ENCODE measurements at regions of chr1 and their contacts with region 1.

Region 1: DNA sequence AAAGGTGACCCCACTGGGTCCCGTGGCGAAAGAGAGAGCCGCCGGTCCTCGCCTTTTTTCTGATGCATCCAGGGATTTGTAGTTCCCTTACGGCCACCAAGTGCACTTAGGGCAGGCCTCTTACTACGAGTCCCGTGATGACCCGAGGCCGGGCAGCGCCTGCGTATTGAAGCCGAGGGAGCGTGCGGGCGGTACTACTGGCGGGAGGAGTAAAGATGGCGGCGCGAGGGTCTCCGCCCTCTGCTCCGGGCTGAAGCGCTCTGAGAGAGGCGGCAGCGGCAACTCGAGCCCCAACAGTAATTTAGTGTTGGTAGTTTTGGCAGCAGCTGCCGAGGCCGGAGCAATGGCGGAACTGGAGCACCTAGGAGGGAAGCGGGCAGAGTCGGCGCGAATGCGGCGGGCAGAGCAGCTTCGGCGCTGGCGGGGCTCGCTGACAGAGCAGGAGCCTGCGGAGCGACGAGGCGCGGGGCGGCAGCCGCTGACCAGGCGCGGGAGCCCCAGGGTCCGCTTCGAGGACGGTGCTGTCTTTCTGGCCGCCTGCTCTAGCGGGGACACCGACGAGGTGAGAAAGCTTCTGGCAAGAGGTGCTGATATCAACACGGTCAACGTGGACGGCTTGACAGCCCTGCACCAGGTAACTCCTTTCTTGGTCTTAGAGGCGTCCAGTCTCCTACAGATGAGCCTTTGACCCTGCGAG is at the start of gene PPP1R12B:
- DNase-seq: peak; percentile 93 to 98 (median 95)
- H3K4me3 ChIP-seq: peak within 1 kb of the TSS; percentile 79 to 90
- H3K4me3 Mint-ChIP-seq: peak within 1 kb of the TSS; percentile 91 to 97 (median 92)
- H3K27ac ChIP-seq: peak within 1 kb of the TSS; percentile 82
- H3K27ac Mint-ChIP-seq: peak within 1 kb of the TSS; percentile 84 to 97 (median 94)
- H3K4me1 ChIP-seq: peaks cover 25% of the 10 kb centered on the region
- H3K4me1 Mint-ChIP-seq: peaks cover 16 to 42% (median 30%) of the 10 kb centered on the region in 4 donors
- H3K27me3 ChIP-seq: no peaks in the 10 kb centered on the region
- H3K27me3 Mint-ChIP-seq: no peaks in the 10 kb centered on the region
- total RNA-seq, gene PPP1R12B: 28.2 to 33.7 TPM

Region 2: GRCh38 chr1:201955009-201955728 is 393.5 kb before region 1 on chr1 and contains the start of gene TIMM17A:
- CTCF ChIA-PET with region 1: no interaction called
- POLR2A ChIA-PET with region 1: no interaction called
- intact Hi-C with region 1: loop called (anchors 5 kb)
- DNase-seq: peak; percentile 90 to 95 (median 90)
- H3K4me3 ChIP-seq: peak within 1 kb of the TSS; percentile 83 to 99
- H3K4me3 Mint-ChIP-seq: peak within 1 kb of the TSS; percentile 92 to 99 (median 98)
- H3K27ac ChIP-seq: peak within 1 kb of the TSS; percentile 83
- H3K27ac Mint-ChIP-seq: peak within 1 kb of the TSS; percentile 97 to 99 (median 98)
- H3K4me1 ChIP-seq: peaks cover 19% of the 10 kb centered on the region
- H3K4me1 Mint-ChIP-seq: peaks cover 12 to 30% (median 20%) of the 10 kb centered on the region in 4 donors
- H3K27me3 ChIP-seq: no peaks in the 10 kb centered on the region
- H3K27me3 Mint-ChIP-seq: no peaks in the 10 kb centered on the region
- total RNA-seq, gene TIMM17A: 26.0 to 27.1 TPM

Region 3: GRCh38 chr1:202713110-202713509 is 364.5 kb after region 1 on chr1:
- CTCF ChIA-PET with region 1: interaction called, 47 read pairs
- POLR2A ChIA-PET with region 1: no interaction called
- intact Hi-C with region 1: no loop called
- DNase-seq: no peak
- H3K4me3 ChIP-seq: no peak overlapping the region
- H3K4me3 Mint-ChIP-seq: no peak overlapping the region
- H3K27ac ChIP-seq: no peak overlapping the region
- H3K27ac Mint-ChIP-seq: peak overlapping the region in 1 of 7 donors; percentile 12
- H3K4me1 ChIP-seq: no peaks in the 10 kb centered on the region
- H3K4me1 Mint-ChIP-seq: peaks cover 0 to 5% (median 0%) of the 10 kb centered on the region in 4 donors
- H3K27me3 ChIP-seq: peaks cover 27% of the 10 kb centered on the region
- H3K27me3 Mint-ChIP-seq: peaks cover 32 to 37% of the 10 kb centered on the region in 2 donors

Region 4: DNA sequence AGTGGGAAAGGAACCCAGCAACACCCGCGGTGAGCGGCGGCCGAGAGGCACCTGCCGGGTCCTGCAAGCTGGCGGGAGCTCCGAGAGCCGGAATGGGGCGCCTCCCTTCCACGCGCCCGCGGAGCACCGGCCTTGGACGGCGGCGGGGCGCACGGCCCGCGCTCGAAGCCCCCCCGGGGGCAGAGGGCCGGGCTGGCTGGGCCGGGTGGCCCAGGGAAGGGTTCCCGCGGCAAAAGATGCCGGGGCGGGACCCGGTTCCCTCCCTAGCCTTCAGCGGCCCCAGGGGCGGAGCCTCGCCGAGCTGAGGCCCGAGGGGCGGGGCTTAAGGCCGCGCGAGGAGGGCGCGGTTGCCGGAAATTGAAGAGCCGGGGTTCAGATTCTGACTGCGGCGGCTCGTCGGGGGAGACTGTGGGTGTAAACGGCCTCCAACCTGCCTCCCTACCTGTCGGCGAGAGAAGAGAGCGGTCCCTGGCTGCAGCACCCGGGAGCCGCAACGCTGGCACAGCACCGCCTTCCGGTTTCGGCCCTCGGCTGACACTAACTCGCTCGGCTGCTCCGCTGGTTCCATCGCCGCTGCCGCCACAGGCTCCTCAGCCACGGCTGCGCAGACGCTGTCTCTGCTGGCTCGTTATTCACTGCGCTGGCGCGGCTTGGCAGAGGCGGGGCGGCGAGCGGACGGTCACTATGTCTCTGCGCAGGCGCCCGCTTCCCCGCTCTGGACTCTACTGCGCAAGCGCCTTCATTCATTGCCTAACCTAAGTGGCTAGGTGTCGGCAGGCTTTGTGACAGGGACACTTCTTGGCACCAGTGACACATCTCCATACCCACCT is 540.1 kb after region 1 on chr1 and contains the start of gene RABIF:
- CTCF ChIA-PET with region 1: no interaction called
- POLR2A ChIA-PET with region 1: interaction called, 3 read pairs
- intact Hi-C with region 1: loop called (anchors 1 kb)
- DNase-seq: peak; percentile 95 to 97 (median 97)
- H3K4me3 ChIP-seq: peak within 1 kb of the TSS; percentile 93 to 95
- H3K4me3 Mint-ChIP-seq: peak within 1 kb of the TSS; percentile 93 to 99 (median 97)
- H3K27ac ChIP-seq: peak within 1 kb of the TSS; percentile 73
- H3K27ac Mint-ChIP-seq: peak within 1 kb of the TSS; percentile 89 to 99 (median 97)
- H3K4me1 ChIP-seq: peaks cover 21% of the 10 kb centered on the region
- H3K4me1 Mint-ChIP-seq: peaks cover 13 to 38% (median 26%) of the 10 kb centered on the region in 4 donors
- H3K27me3 ChIP-seq: no peaks in the 10 kb centered on the region
- H3K27me3 Mint-ChIP-seq: no peaks in the 10 kb centered on the region
- total RNA-seq, gene RABIF: 17.3 to 18.7 TPM

Region 5: GRCh38 chr1:203795441-203796235 is 1447.0 kb after region 1 on chr1 and contains the starts of genes ZBED6 and ZC3H11A:
- CTCF ChIA-PET with region 1: no interaction called
- POLR2A ChIA-PET with region 1: no interaction called
- intact Hi-C with region 1: loop called (anchors 5 kb)
- DNase-seq: peak; percentile 96 to 100 (median 98)
- H3K4me3 ChIP-seq: peak within 1 kb of the TSS; percentile 72 to 74
- H3K4me3 Mint-ChIP-seq: peak within 1 kb of the TSS; percentile 91 to 99 (median 97)
- H3K27ac ChIP-seq: peak within 1 kb of the TSS; percentile 81
- H3K27ac Mint-ChIP-seq: peak within 1 kb of the TSS; percentile 86 to 99 (median 98)
- H3K4me1 ChIP-seq: peaks cover 51% of the 10 kb centered on the region
- H3K4me1 Mint-ChIP-seq: peaks cover 35 to 57% (median 48%) of the 10 kb centered on the region in 4 donors
- H3K27me3 ChIP-seq: no peaks in the 10 kb centered on the region
- H3K27me3 Mint-ChIP-seq: no peaks in the 10 kb centered on the region
- total RNA-seq, gene ZBED6: 26.5 to 29.3 TPM
- total RNA-seq, gene ZC3H11A: 132 to 141 TPM